CD14-positive monocyte (primary cell): ENCODE measurements at regions of chr3 and their contacts with region 1.

Region 1: DNA sequence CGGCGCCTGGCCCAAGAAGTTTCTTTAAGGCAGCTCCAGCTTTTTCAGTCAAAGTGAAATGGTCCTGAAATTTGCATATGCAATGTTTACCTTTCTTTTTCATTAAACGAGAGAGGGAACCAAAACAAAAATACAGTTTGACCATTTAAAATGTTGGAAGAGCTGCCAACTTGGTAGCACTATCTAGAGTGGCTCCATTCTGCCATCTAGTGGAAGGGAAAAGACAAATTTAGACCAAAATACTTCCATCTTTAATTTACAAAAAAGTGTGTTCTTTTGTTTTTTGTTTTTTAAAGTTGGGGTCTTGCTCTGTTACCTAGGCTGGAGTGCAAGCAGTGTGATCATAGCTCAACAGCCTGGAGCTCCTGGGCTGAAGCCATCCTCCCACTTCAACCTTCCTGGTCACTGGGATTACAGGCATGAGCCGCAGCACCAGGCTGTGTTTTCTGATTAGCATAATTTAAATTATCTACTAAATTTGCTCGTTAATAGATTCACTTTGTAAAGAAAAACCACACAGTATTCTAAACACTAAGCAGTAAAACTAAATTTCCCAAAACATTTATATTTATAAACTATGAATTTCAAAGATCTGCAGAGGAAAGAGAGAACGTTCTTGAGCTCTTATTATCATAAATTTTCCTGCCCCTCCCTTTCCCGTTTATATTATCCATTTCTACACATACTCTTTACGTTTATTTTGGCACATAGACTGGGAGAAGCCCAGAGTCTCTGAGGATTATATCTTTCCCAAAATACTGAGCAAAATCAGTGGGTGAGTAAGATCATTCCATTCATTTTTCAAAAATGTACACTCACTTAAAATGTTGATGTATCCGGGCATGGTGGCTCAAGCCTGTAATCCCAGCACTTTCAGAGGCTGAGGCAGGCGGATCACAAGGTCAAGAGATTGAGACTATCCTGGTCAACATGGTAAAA is 15.4 kb upstream of the RFC4 start:
- DNase-seq: peak; percentile 30 to 51 (median 43)
- H3K4me3 ChIP-seq: no peak overlapping the region
- H3K4me3 Mint-ChIP-seq: peak overlapping the region in 1 of 2 donors; percentile 39
- H3K27ac ChIP-seq: no peak overlapping the region
- H3K27ac Mint-ChIP-seq: no peak overlapping the region
- H3K4me1 ChIP-seq: peaks cover 11 to 16% of the 10 kb centered on the region in 2 donors
- H3K4me1 Mint-ChIP-seq: peaks cover 21% of the 10 kb centered on the region
- H3K27me3 ChIP-seq: peaks cover 31 to 36% of the 10 kb centered on the region in 2 donors
- H3K27me3 Mint-ChIP-seq: peaks cover 37 to 43% (median 41%) of the 10 kb centered on the region in 3 donors
- CTCF ChIP-seq: peak; percentile 74

Region 2: GRCh38 chr3:186617038-186617946 is 204.4 kb before region 1 on chr3:
- intact Hi-C with region 1: loop called (anchors 2 kb)
- DNase-seq: peak; percentile 63 to 78 (median 67)
- H3K4me3 ChIP-seq: no peak overlapping the region
- H3K4me3 Mint-ChIP-seq: peak overlapping the region; percentile 6 to 85
- H3K27ac ChIP-seq: no peak overlapping the region
- H3K27ac Mint-ChIP-seq: no peak overlapping the region
- H3K4me1 ChIP-seq: peaks cover 6 to 10% of the 10 kb centered on the region in 2 donors
- H3K4me1 Mint-ChIP-seq: peaks cover 18% of the 10 kb centered on the region
- H3K27me3 ChIP-seq: peaks cover 13 to 34% of the 10 kb centered on the region in 2 donors
- H3K27me3 Mint-ChIP-seq: peaks cover 30 to 37% (median 34%) of the 10 kb centered on the region in 3 donors
- CTCF ChIP-seq: peak; percentile 90

Region 3: DNA sequence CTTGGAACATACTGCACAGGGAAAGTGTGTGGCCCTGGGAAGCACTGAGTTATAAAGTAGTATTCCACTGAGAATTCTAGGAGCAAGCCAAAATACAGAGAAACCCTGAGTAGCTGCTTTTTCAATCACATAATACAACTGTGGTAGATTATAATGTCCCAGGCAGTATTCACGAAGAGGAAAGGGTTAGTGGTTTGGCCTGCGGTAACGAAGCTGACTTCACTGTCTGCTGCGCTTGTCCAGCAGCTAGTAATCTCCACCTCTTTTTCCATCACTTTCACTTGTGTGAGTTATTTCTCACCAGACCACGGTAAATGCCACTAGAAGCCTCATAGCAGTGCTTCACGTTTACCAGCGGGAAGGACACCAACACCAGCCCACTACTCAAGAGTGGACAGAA is 283.2 kb after region 1 on chr3:
- intact Hi-C with region 1: no loop called
- DNase-seq: no peak
- H3K4me3 ChIP-seq: no peak overlapping the region
- H3K4me3 Mint-ChIP-seq: peak overlapping the region in 1 of 2 donors; percentile 25
- H3K27ac ChIP-seq: no peak overlapping the region
- H3K27ac Mint-ChIP-seq: no peak overlapping the region
- H3K4me1 ChIP-seq: peaks cover 5 to 9% of the 10 kb centered on the region in 2 donors
- H3K4me1 Mint-ChIP-seq: peaks cover 12% of the 10 kb centered on the region
- H3K27me3 ChIP-seq: no peaks in the 10 kb centered on the region
- H3K27me3 Mint-ChIP-seq: no peaks in the 10 kb centered on the region
- CTCF ChIP-seq: no peak